ENCODE measurements at regions of chr9 and their contacts with region 1.

Region 1: GRCh38 chr9:112793213-112793810 is 42.8 kb downstream of the SNX30 start:
- DNase-seq: peak; percentile 68 to 87 (median 79)
- ATAC-seq: peak; percentile 93
- H3K4me3 ChIP-seq: no peak overlapping the region
- H3K4me3 Mint-ChIP-seq: no peak overlapping the region
- H3K27ac ChIP-seq: no peak overlapping the region
- H3K27ac Mint-ChIP-seq: no peak overlapping the region
- H3K4me1 ChIP-seq: peaks cover 5% of the 10 kb centered on the region
- H3K4me1 Mint-ChIP-seq: peaks cover 17% of the 10 kb centered on the region
- H3K27me3 ChIP-seq: no peaks in the 10 kb centered on the region
- H3K27me3 Mint-ChIP-seq: no peaks in the 10 kb centered on the region
- CTCF ChIP-seq: peak; percentile 75

Region 2: DNA sequence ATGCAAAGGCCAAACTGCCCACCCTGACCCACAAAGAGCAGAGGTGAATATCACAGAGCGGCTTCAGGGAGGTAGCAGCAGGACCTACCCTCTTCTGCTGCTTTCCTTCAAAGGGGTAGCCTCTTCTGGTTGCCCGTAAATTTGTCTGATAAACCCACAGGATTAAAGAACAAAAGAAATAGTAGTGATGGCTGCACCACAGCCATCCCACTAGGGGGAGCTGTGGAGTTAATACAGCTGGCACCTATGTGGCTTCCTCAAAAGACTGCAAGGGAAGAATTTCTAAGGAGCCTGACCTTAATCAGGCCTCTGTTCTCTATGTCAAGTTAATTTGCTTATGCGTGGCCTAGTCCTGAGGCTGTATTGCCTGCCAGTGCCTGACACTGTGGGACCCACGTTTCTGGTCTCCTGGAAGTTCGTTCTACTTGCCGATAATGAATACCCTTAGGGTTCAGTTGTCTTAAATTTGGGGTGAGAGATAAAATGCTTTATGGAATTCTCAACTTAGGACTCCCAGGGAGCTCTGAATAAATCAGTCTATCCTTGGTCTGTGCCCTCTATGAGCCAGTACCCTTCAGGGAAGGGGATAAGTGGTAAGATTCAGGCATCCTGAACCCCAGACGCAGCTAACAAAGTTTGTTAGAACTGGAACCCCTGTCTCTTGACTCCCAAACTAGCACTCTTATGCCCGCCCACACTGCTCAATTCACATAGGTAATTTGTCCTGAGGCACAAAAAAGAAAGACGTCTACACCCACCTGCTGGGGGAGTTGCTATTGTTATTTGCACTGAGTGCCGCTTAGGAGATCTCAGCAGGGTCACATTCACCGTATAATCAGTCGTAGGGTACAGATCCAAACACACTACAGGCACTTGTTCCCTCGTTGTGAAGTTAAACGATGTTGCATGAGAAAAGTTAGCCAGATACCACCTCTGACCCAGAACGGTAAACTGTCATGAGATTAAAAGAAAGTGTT is 695.3 kb before region 1 on chr9:
- CTCF ChIA-PET with region 1: interaction called, 3 read pairs
- POLR2A ChIA-PET with region 1: no interaction called
- intact Hi-C with region 1: loop called in 1 of 2 experiments (anchors 5 kb)
- DNase-seq: peak; percentile 47 to 87 (median 56)
- ATAC-seq: peak; percentile 93
- H3K4me3 ChIP-seq: no peak overlapping the region
- H3K4me3 Mint-ChIP-seq: no peak overlapping the region
- H3K27ac ChIP-seq: no peak overlapping the region
- H3K27ac Mint-ChIP-seq: no peak overlapping the region
- H3K4me1 ChIP-seq: peaks cover 19% of the 10 kb centered on the region
- H3K4me1 Mint-ChIP-seq: peaks cover 23% of the 10 kb centered on the region
- H3K27me3 ChIP-seq: no peaks in the 10 kb centered on the region
- H3K27me3 Mint-ChIP-seq: no peaks in the 10 kb centered on the region
- CTCF ChIP-seq: peak; percentile 81

Region 3: GRCh38 chr9:112361601-112362000 is 431.7 kb before region 1 on chr9:
- CTCF ChIA-PET with region 1: no interaction called
- POLR2A ChIA-PET with region 1: no interaction called
- intact Hi-C with region 1: loop called in 1 of 2 experiments (anchors 10 kb)
- DNase-seq: peak in 4 of 14 experiments; percentile 48 to 74 (median 64)
- ATAC-seq: no peak
- H3K4me3 ChIP-seq: no peak overlapping the region
- H3K4me3 Mint-ChIP-seq: no peak overlapping the region
- H3K27ac ChIP-seq: no peak overlapping the region
- H3K27ac Mint-ChIP-seq: no peak overlapping the region
- H3K4me1 ChIP-seq: no peaks in the 10 kb centered on the region
- H3K4me1 Mint-ChIP-seq: peaks cover 4% of the 10 kb centered on the region
- H3K27me3 ChIP-seq: no peaks in the 10 kb centered on the region
- H3K27me3 Mint-ChIP-seq: no peaks in the 10 kb centered on the region
- CTCF ChIP-seq: peak; percentile 86

Region 4: GRCh38 chr9:112443200-112443599 is 350.1 kb before region 1 on chr9:
- CTCF ChIA-PET with region 1: interaction called, 9 read pairs
- POLR2A ChIA-PET with region 1: no interaction called
- intact Hi-C with region 1: loop called (anchors 1 to 5 kb)
- DNase-seq: peak in 13 of 14 experiments; percentile 1 to 59 (median 14)
- ATAC-seq: peak; percentile 43
- H3K4me3 ChIP-seq: no peak overlapping the region
- H3K4me3 Mint-ChIP-seq: no peak overlapping the region
- H3K27ac ChIP-seq: no peak overlapping the region
- H3K27ac Mint-ChIP-seq: no peak overlapping the region
- H3K4me1 ChIP-seq: no peaks in the 10 kb centered on the region
- H3K4me1 Mint-ChIP-seq: no peaks in the 10 kb centered on the region
- H3K27me3 ChIP-seq: no peaks in the 10 kb centered on the region
- H3K27me3 Mint-ChIP-seq: no peaks in the 10 kb centered on the region
- CTCF ChIP-seq: peak; percentile 47

Region 5: DNA sequence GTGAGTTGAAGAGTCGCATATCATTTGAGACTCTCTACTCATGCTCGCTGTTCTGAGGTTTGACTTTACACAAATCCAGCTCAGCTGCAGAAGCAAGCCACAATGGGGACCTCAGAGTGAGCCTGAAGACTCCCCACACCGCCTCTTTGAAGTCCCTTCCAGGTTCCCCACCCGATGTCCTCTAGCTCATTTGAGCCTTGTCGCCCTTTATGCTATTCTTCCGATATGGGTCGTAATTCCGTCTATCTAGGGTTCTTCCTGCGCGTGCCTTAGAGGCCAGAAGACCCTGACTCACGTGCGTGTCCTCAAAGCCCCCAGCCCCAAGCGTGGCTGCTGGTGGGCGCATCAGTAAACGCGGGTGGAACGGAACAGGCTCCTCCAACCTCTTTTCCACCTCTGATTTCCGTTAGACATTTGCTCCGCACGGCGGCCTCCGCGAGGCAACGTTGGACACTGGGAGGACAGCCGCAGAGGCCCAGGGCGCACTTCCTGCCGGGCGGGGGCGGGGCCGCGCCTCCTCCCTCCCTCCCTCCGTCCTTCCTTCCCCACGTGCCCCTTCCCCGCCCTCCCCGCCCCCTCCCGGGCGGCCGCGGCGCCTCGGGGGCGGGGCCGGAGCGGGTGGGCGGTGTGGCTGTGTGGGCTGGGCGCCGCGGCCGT is 43.1 kb before region 1 on chr9 and contains the start of gene SNX30:
- CTCF ChIA-PET with region 1: interaction called, 8 read pairs
- POLR2A ChIA-PET with region 1: no interaction called
- intact Hi-C with region 1: loop called (anchors 5 kb)
- DNase-seq: peak; percentile 49 to 92 (median 78)
- ATAC-seq: peak; percentile 65
- H3K4me3 ChIP-seq: peak within 1 kb of the TSS; percentile 81
- H3K4me3 Mint-ChIP-seq: peak within 1 kb of the TSS; percentile 91
- H3K27ac ChIP-seq: peak within 1 kb of the TSS; percentile 60 to 79
- H3K27ac Mint-ChIP-seq: peak within 1 kb of the TSS; percentile 81
- H3K4me1 ChIP-seq: peaks cover 55% of the 10 kb centered on the region
- H3K4me1 Mint-ChIP-seq: peaks cover 59% of the 10 kb centered on the region
- H3K27me3 ChIP-seq: no peaks in the 10 kb centered on the region
- H3K27me3 Mint-ChIP-seq: no peaks in the 10 kb centered on the region
- CTCF ChIP-seq: no peak
- total RNA-seq, gene SNX30: 5.2 to 5.8 TPM